GM18951 (cell line): ENCODE measurements at regions of chr5 and their contacts with region 1.

Region 1: DNA sequence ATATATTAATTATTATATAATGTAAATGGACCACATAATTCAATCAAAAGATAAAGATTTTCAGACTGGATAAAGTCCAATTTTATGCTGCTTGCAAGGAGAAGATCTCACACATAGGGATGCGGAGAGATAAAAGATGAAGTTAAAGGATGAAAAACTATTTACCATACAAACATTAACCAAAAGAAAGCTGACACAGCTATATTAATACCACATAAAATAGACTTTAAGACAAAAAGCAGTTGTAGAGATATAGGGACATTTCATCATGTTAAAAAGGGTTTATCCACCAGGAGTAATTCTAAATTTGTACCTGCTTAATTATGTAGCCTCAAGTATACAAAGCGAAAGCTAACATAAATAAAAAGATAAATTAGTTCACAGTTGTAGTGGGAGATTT is 15.2 kb upstream of the NSG2 start:
- POLR2A ChIP-seq: no peak

Region 2: DNA sequence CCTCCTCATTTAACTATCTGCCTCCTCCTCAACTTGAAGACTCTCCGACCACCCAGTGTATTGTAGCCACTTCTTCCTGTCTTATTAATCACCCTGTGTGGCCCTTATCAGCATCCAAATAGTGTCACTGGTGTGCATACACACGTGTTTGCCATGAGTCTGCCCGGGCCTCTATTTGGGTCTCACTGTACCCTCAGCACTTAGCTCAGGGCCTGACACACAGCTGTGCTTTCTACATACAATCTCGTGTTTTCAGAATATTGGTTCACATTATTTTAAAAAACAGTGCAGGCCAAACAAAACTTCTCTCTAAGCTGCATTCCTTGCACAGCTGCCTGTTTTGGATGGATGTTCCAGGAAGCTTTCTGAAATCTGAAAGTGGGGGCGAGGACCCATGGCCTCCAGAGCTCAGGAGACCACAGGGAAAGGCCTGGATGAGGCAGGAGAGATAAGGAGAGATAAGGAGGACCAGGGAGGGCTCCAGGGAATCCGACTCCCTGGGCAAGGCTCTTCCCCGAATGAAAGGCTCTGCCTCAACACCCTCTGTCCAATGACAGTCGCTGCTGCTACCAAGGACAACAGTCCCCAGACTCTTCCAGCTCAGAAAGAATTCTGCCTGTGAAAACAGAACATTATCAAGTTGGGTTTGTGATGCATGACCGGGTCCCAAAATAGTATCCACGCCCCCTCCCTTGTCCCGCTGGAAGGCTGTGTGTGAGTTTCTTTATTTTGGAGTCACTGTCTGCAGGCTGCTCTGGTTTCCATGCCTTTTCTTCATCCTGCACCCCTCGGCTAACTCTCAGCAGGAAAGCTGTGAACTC is 270.9 kb after region 1 on chr5:
- in situ Hi-C with region 1: loop called (anchors 10 kb)
- POLR2A ChIP-seq: no peak